Panc1 (cell line): ENCODE measurements at regions of chr1 and their contacts with region 1.

Region 1: GRCh38 chr1:62887799-62888507 is 104.0 kb downstream of the ATG4C start:
- DNase-seq: no peak
- ATAC-seq: no peak
- H3K4me3 ChIP-seq: no peak overlapping the region
- H3K27ac ChIP-seq: no peak overlapping the region
- H3K4me1 ChIP-seq: no peaks in the 10 kb centered on the region
- H3K27me3 ChIP-seq: peaks cover 7% of the 10 kb centered on the region
- CTCF ChIP-seq: no peak

Region 2: GRCh38 chr1:63124666-63125191 is 236.8 kb after region 1 on chr1:
- CTCF ChIA-PET with region 1: no interaction called
- POLR2A ChIA-PET with region 1: interaction called, 10 read pairs
- in situ Hi-C with region 1: no loop called
- intact Hi-C with region 1: no loop called
- DNase-seq: no peak
- ATAC-seq: no peak
- H3K4me3 ChIP-seq: no peak overlapping the region
- H3K27ac ChIP-seq: no peak overlapping the region
- H3K4me1 ChIP-seq: no peaks in the 10 kb centered on the region
- H3K27me3 ChIP-seq: peaks cover 6% of the 10 kb centered on the region
- CTCF ChIP-seq: no peak